HAP-1 (cell line): ENCODE measurements at regions of chr3 and their contacts with region 1.

Region 1: GRCh38 chr3:189961525-189962161 is 159.1 kb downstream of the P3H2 start:
- DNase-seq: peak; percentile 71 to 81
- H3K4me3 ChIP-seq: no peak overlapping the region
- H3K4me1 ChIP-seq: no peaks in the 10 kb centered on the region
- H3K27me3 ChIP-seq: peaks cover 8% of the 10 kb centered on the region

Region 2: DNA sequence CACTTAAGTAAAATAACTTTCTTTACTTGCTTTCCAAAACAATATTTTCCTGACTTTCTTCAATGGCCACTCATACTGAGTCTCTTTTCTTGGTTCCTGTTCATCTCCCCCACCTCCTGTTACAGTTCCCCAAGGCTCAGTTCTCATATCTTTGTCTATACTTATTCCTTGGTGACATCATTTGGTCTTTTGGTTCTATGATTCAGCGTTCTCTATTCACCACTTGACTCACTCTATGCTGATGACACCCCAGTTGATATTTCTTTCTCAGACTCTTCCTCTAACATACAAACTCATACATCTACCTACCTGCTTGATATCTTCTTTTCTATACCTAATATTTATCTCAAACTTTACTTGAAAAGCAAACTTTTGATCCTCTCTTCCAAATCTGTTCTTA is 244.1 kb after region 1 on chr3:
- in situ Hi-C with region 1: loop called (anchors 10 kb)
- DNase-seq: no peak
- H3K4me3 ChIP-seq: no peak overlapping the region
- H3K4me1 ChIP-seq: no peaks in the 10 kb centered on the region
- H3K27me3 ChIP-seq: no peaks in the 10 kb centered on the region

Region 3: GRCh38 chr3:190306513-190307165 is 345.0 kb after region 1 on chr3:
- in situ Hi-C with region 1: no loop called
- DNase-seq: no peak
- H3K4me3 ChIP-seq: no peak overlapping the region
- H3K4me1 ChIP-seq: no peaks in the 10 kb centered on the region
- H3K27me3 ChIP-seq: no peaks in the 10 kb centered on the region

Region 4: GRCh38 chr3:190424478-190425439 is 463.1 kb after region 1 on chr3:
- in situ Hi-C with region 1: loop called (anchors 25 kb)
- DNase-seq: peak; percentile 54 to 69
- H3K4me3 ChIP-seq: no peak overlapping the region
- H3K4me1 ChIP-seq: no peaks in the 10 kb centered on the region
- H3K27me3 ChIP-seq: peaks cover 8% of the 10 kb centered on the region